ENCODE measurements at regions of chr4 and their contacts with region 1.

Region 1: DNA sequence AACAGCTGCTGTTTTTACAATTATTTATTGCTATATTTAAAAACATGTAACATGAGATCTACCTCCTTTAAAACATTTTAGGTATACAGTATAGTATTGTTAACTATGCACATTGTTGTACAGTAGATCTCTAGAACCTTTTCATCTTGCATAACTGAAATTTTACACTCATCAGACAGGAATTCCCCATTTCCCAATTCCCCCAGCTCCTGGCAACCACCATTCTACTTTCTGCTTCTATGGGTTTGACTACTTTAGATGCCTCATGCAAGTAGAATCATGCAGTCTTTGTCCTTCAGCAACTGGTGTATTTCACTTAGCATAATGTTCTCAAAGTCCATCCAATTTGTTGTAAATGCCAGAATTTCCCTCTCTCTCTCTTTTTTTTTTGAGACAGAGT is 9.7 kb upstream of the LSM6 start:
- DNase-seq: peak; percentile 75
- ATAC-seq: peak; percentile 72
- H3K4me3 ChIP-seq: no peak overlapping the region
- H3K27ac ChIP-seq: no peak overlapping the region
- H3K4me1 ChIP-seq: no peaks in the 10 kb centered on the region; the same call in 1 of the 2 replicates
- H3K27me3 ChIP-seq: no peaks in the 10 kb centered on the region
- CTCF ChIP-seq: no peak
- POLR2A ChIP-seq: no peak
- RAD21 ChIP-seq: no peak

Region 2: GRCh38 chr4:146059865-146060264 is 106.0 kb before region 1 on chr4:
- CTCF ChIA-PET with region 1: no interaction called
- POLR2A ChIA-PET with region 1: no interaction called
- dilution Hi-C with region 1: no loop called
- in situ Hi-C with region 1: no loop called
- intact Hi-C with region 1: loop called (anchors 5 kb)
- DNase-seq: no peak
- ATAC-seq: no peak
- H3K4me3 ChIP-seq: no peak overlapping the region
- H3K27ac ChIP-seq: no peak overlapping the region
- H3K4me1 ChIP-seq: peaks cover under 1% of the 10 kb centered on the region; the same call in 1 of the 2 replicates
- H3K27me3 ChIP-seq: peaks cover 3% of the 10 kb centered on the region; the same call in 1 of the 2 replicates
- CTCF ChIP-seq: no peak
- POLR2A ChIP-seq: no peak
- RAD21 ChIP-seq: no peak

Region 3: GRCh38 chr4:146415829-146416228 is 250.0 kb after region 1 on chr4:
- CTCF ChIA-PET with region 1: no interaction called
- POLR2A ChIA-PET with region 1: no interaction called
- dilution Hi-C with region 1: no loop called
- in situ Hi-C with region 1: no loop called
- intact Hi-C with region 1: no loop called
- DNase-seq: no peak
- ATAC-seq: no peak
- H3K4me3 ChIP-seq: no peak overlapping the region
- H3K27ac ChIP-seq: no peak overlapping the region
- H3K4me1 ChIP-seq: no peaks in the 10 kb centered on the region
- H3K27me3 ChIP-seq: no peaks in the 10 kb centered on the region
- CTCF ChIP-seq: no peak
- POLR2A ChIP-seq: no peak
- RAD21 ChIP-seq: no peak